SK-N-SH (cell line): ENCODE measurements at regions of chr2 and their contacts with region 1.

Region 1: GRCh38 chr2:41955316-41956043 is 92.3 kb upstream of the PKDCC start:
- DNase-seq: no peak
- H3K4me3 ChIP-seq: peak overlapping the region in 1 of 2 experiments; percentile 35; a peak in 2 of 4 replicates
- H3K27ac ChIP-seq: peak overlapping the region; percentile 36 to 99; a peak in 3 of 4 replicates
- H3K4me1 ChIP-seq: peaks cover 0 to 64% of the 10 kb centered on the region in 2 experiments; a peak in 2 of 4 replicates
- H3K27me3 ChIP-seq: no peaks in the 10 kb centered on the region; the same call in 1 of the 2 replicates
- CTCF ChIP-seq: no peak
- EP300 ChIP-seq: peak in 1 of 2 experiments; percentile 63; a peak in 2 of 4 replicates
- RAD21 ChIP-seq: peak; percentile 15; the same call in 1 of the 2 replicates

Region 2: DNA sequence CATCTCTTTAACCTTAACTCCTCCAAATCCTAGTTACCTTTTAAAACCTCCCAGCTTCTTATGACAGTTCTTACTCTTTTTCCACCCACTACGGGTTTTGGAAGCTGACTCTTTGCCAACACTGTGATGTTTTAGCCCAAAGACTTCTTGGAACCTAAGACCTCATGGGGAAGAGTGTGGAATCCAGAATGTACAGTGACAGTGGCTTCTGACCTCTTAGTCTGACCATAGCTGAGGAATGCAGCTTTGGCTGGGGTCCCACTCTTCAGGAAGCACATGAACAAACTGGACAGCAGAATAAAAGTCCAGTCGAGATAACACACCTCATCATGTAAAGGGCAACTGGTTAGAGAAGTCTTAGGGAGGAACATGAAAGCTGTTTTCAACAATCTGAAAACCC is 68.7 kb before region 1 on chr2:
- CTCF ChIA-PET with region 1: interaction called, 23 read pairs
- POLR2A ChIA-PET with region 1: interaction called, 8 read pairs
- DNase-seq: no peak
- H3K4me3 ChIP-seq: no peak overlapping the region
- H3K27ac ChIP-seq: peak overlapping the region in 1 of 2 experiments; percentile 100; a peak in 2 of 4 replicates
- H3K4me1 ChIP-seq: peaks cover 0 to 23% of the 10 kb centered on the region in 2 experiments; a peak in 2 of 4 replicates
- H3K27me3 ChIP-seq: peaks cover 5% of the 10 kb centered on the region; the same call in 1 of the 2 replicates
- CTCF ChIP-seq: no peak
- EP300 ChIP-seq: no peak
- RAD21 ChIP-seq: no peak

Region 3: GRCh38 chr2:41933585-41934320 is 21.7 kb before region 1 on chr2:
- CTCF ChIA-PET with region 1: interaction called, 10 read pairs
- POLR2A ChIA-PET with region 1: interaction called, 12 read pairs
- DNase-seq: no peak
- H3K4me3 ChIP-seq: no peak overlapping the region
- H3K27ac ChIP-seq: no peak overlapping the region
- H3K4me1 ChIP-seq: peaks cover 13 to 50% of the 10 kb centered on the region in 2 experiments; a peak in 3 of 4 replicates
- H3K27me3 ChIP-seq: no peaks in the 10 kb centered on the region
- CTCF ChIP-seq: no peak
- EP300 ChIP-seq: no peak
- RAD21 ChIP-seq: no peak

Region 4: GRCh38 chr2:41941831-41942230 is 13.6 kb before region 1 on chr2:
- CTCF ChIA-PET with region 1: interaction called, 14 read pairs
- POLR2A ChIA-PET with region 1: interaction called, 10 read pairs
- DNase-seq: no peak
- H3K4me3 ChIP-seq: no peak overlapping the region
- H3K27ac ChIP-seq: no peak overlapping the region
- H3K4me1 ChIP-seq: peaks cover 16 to 19% of the 10 kb centered on the region in 2 experiments; a peak in 3 of 4 replicates
- H3K27me3 ChIP-seq: no peaks in the 10 kb centered on the region
- CTCF ChIP-seq: no peak
- EP300 ChIP-seq: no peak
- RAD21 ChIP-seq: no peak

Region 5: DNA sequence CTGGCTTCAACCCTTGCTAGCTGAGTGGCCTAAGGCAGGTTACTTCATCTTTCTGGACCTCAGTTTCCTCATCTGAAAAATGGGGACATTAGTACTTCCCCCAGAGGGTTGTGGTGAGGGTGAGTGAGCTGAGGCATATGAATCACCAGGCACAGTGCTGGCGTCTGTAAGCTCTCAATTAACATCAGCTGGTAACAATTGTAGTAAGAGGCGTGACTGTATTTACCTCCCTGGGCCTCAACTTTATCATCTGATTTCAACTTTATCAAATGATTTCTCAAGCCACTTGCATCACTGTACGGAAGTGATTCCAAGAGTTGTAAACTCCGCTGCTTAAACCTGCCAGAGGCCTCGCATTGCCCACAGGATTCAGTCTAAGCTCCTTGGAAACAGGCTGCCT is 38.7 kb after region 1 on chr2:
- CTCF ChIA-PET with region 1: no interaction called
- POLR2A ChIA-PET with region 1: no interaction called
- DNase-seq: no peak
- H3K4me3 ChIP-seq: no peak overlapping the region
- H3K27ac ChIP-seq: no peak overlapping the region
- H3K4me1 ChIP-seq: peaks cover 8 to 15% of the 10 kb centered on the region in 2 experiments; a peak in 2 of 4 replicates
- H3K27me3 ChIP-seq: no peaks in the 10 kb centered on the region; the same call in 1 of the 2 replicates
- CTCF ChIP-seq: no peak
- EP300 ChIP-seq: no peak
- RAD21 ChIP-seq: no peak